HAP-1 (cell line): ENCODE measurements at regions of chr20 and their contacts with region 1.

Region 1: DNA sequence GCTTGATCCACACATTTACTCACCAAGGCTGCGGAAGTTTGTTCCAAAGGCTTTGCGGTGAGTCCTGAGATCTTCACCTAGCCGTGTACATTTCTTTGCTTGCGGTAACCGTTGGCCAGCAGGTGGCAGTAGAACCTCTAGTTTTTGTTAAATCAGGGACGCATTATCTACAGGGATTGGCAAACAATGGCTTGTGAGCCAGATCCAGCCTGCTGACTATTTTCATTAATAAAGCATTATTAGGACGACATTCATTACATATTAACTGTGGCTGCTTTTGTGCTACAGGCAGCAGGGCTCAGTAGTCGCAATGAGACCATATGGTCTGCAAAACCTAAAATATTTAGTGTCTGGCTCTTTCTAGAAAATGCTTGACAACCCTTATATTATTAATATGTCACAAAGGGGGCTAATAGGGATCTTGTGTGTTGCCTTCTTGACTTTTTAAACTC is 174.1 kb downstream of the DOK5 start:
- DNase-seq: peak; percentile 71 to 89
- H3K4me3 ChIP-seq: no peak overlapping the region
- H3K4me1 ChIP-seq: no peaks in the 10 kb centered on the region
- H3K27me3 ChIP-seq: no peaks in the 10 kb centered on the region; the same call in 1 of the 2 replicates

Region 2: GRCh38 chr20:54103067-54103761 is 546.3 kb before region 1 on chr20:
- in situ Hi-C with region 1: loop called (anchors 10 kb)
- DNase-seq: peak; percentile 47 to 91
- H3K4me3 ChIP-seq: no peak overlapping the region
- H3K4me1 ChIP-seq: no peaks in the 10 kb centered on the region
- H3K27me3 ChIP-seq: peaks cover 8% of the 10 kb centered on the region

Region 3: GRCh38 chr20:54219751-54220426 is 429.6 kb before region 1 on chr20:
- in situ Hi-C with region 1: loop called (anchors 10 kb)
- DNase-seq: peak; percentile 20 to 29
- H3K4me3 ChIP-seq: no peak overlapping the region
- H3K4me1 ChIP-seq: no peaks in the 10 kb centered on the region
- H3K27me3 ChIP-seq: no peaks in the 10 kb centered on the region